ENCODE measurements at regions of chr6 and their contacts with region 1.

Region 1: DNA sequence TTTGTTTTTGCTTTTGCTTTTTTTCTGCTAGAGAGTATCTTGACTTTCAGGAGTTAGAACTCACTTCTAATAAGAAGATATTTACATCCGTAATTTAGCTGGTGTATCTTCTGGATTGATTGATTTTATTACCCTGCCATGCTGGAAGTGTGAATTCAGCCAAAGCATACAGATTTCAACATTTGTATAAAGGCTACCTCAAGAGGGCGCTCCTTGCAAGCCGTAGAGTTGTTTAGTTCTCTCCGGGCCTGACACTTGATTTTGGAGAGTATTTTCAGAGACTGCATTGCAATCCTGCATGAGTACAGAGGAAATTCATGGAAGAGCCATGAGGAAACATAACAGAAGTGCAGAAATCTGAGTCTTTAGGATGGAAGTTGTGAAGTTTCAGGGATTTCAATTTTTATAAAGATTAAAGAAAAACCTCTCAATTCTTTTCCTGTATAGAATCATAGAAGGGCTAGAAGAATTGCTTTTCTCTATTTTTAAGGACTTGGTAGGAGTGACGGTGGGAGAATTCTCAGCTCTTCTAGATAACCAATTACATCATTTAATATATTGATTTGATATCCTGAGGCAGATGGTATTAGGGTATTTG is 66.7 kb upstream of the TIAM2 start:
- DNase-seq: peak; percentile 47 to 71
- H3K4me3 ChIP-seq: no peak overlapping the region
- H3K4me3 Mint-ChIP-seq: no peak overlapping the region
- H3K27ac Mint-ChIP-seq: no peak overlapping the region
- H3K4me1 ChIP-seq: peaks cover 25% of the 10 kb centered on the region
- H3K4me1 Mint-ChIP-seq: peaks cover 21% of the 10 kb centered on the region
- H3K27me3 ChIP-seq: no peaks in the 10 kb centered on the region
- H3K27me3 Mint-ChIP-seq: no peaks in the 10 kb centered on the region
- CTCF ChIP-seq: peak; percentile 74 to 77

Region 2: GRCh38 chr6:154969796-154970195 is 41.4 kb after region 1 on chr6:
- CTCF ChIA-PET with region 1: no interaction called
- POLR2A ChIA-PET with region 1: no interaction called
- intact Hi-C with region 1: no loop called
- DNase-seq: no peak
- H3K4me3 ChIP-seq: no peak overlapping the region
- H3K4me3 Mint-ChIP-seq: no peak overlapping the region
- H3K27ac Mint-ChIP-seq: no peak overlapping the region
- H3K4me1 ChIP-seq: peaks cover 4% of the 10 kb centered on the region
- H3K4me1 Mint-ChIP-seq: no peaks in the 10 kb centered on the region
- H3K27me3 ChIP-seq: no peaks in the 10 kb centered on the region
- H3K27me3 Mint-ChIP-seq: no peaks in the 10 kb centered on the region
- CTCF ChIP-seq: no peak

Region 3: DNA sequence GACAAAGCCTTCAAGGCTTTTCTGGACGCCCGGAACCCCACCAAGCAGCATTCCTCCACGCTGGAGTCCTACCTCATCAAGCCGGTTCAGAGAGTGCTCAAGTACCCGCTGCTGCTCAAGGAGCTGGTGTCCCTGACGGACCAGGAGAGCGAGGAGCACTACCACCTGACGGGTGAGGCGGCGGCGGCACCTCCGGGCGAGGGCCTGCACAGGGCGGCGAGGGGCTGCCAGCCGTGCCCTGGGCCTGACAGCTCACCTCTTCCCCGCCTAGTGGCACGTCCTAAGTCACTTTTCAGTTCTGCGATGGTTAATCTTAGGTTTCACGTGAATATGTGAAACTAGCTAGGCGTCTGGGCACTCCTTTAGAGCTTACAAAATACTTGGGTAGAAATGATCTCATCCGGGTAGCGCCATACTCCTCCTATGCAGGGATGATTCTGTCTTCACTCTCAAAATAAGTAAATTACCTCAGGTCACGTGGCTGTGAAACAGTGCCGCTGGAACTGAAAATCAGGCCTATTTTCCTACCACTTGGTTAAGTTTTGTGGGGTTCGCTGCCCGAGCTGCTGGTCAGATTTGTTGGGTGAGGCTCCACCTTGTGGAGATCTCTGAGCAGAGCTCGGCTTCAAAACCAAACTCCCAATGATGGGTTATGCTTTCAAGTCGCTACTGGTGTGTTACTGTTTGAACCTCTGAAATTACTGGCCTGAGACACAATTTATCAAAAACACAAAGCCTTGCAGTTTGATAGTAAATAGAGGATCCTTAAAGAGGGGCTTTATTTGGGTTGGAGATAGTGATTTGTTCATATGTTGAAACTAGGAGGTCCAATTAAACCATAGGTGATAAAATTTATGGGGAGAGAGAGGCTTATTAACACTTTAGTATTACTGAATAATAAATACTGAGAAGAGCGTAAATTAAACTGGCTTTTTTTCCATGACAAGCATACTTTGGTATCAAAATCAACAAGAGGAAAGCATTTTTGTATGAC is 319.9 kb after region 1 on chr6:
- CTCF ChIA-PET with region 1: no interaction called
- POLR2A ChIA-PET with region 1: no interaction called
- intact Hi-C with region 1: loop called (anchors 1 kb)
- DNase-seq: peak; percentile 54 to 55
- H3K4me3 ChIP-seq: no peak overlapping the region
- H3K4me3 Mint-ChIP-seq: no peak overlapping the region
- H3K27ac Mint-ChIP-seq: peak overlapping the region; percentile 69
- H3K4me1 ChIP-seq: peaks cover 21% of the 10 kb centered on the region
- H3K4me1 Mint-ChIP-seq: peaks cover 11% of the 10 kb centered on the region
- H3K27me3 ChIP-seq: no peaks in the 10 kb centered on the region
- H3K27me3 Mint-ChIP-seq: no peaks in the 10 kb centered on the region
- CTCF ChIP-seq: peak; percentile 53 to 66

Region 4: GRCh38 chr6:155264693-155265320 is 336.4 kb after region 1 on chr6:
- CTCF ChIA-PET with region 1: interaction called, 3 read pairs
- POLR2A ChIA-PET with region 1: no interaction called
- intact Hi-C with region 1: loop called (anchors 5 kb)
- DNase-seq: no peak
- H3K4me3 ChIP-seq: no peak overlapping the region
- H3K4me3 Mint-ChIP-seq: no peak overlapping the region
- H3K27ac Mint-ChIP-seq: no peak overlapping the region
- H3K4me1 ChIP-seq: peaks cover 5% of the 10 kb centered on the region; the same call in 1 of the 2 replicates
- H3K4me1 Mint-ChIP-seq: no peaks in the 10 kb centered on the region
- H3K27me3 ChIP-seq: no peaks in the 10 kb centered on the region
- H3K27me3 Mint-ChIP-seq: no peaks in the 10 kb centered on the region
- CTCF ChIP-seq: no peak

Region 5: GRCh38 chr6:155936551-155936950 is 1008.1 kb after region 1 on chr6:
- CTCF ChIA-PET with region 1: no interaction called
- POLR2A ChIA-PET with region 1: no interaction called
- intact Hi-C with region 1: no loop called
- DNase-seq: no peak
- H3K4me3 ChIP-seq: no peak overlapping the region
- H3K4me3 Mint-ChIP-seq: no peak overlapping the region
- H3K27ac Mint-ChIP-seq: no peak overlapping the region
- H3K4me1 ChIP-seq: no peaks in the 10 kb centered on the region
- H3K4me1 Mint-ChIP-seq: no peaks in the 10 kb centered on the region
- H3K27me3 ChIP-seq: no peaks in the 10 kb centered on the region
- H3K27me3 Mint-ChIP-seq: peaks cover 2% of the 10 kb centered on the region
- CTCF ChIP-seq: no peak

Measured in Caco-2 (cell line).